ENCODE measurements at regions of chr20 and their contacts with region 1.

Region 1: DNA sequence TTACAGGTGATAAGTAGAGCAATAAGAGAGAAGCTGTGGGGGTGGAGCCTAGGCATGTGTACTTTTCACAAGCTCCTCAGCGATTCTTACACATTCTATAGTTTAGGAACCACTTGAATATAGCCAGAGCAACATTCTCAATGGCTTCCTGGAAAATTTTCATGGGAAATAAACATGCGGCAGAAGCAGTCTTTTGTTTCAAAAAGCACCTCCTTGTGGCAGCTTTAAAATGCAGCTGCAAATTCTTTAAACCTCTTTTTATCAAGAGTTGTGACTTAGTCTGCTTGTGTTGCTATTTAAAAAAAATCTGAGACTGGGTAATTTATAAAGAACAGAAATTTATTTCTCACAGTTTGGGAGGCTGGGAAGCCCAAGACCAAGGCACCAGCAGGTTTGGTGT is 23.8 kb downstream of the NKX2-2 start:
- DNase-seq: no peak
- H3K4me3 Mint-ChIP-seq: no peak overlapping the region
- H3K27ac Mint-ChIP-seq: no peak overlapping the region
- H3K4me1 Mint-ChIP-seq: no peaks in the 10 kb centered on the region
- H3K27me3 Mint-ChIP-seq: peaks cover 13% of the 10 kb centered on the region
- CTCF ChIP-seq: no peak

Region 2: GRCh38 chr20:20860078-20860806 is 629.9 kb before region 1 on chr20:
- CTCF ChIA-PET with region 1: no interaction called
- intact Hi-C with region 1: loop called (anchors 10 kb)
- DNase-seq: peak; percentile 70
- H3K4me3 Mint-ChIP-seq: no peak overlapping the region
- H3K27ac Mint-ChIP-seq: no peak overlapping the region
- H3K4me1 Mint-ChIP-seq: no peaks in the 10 kb centered on the region
- H3K27me3 Mint-ChIP-seq: no peaks in the 10 kb centered on the region
- CTCF ChIP-seq: peak; percentile 37

Measured in Calu3 (cell line).